Endothelial cell of umbilical vein (primary cell): ENCODE measurements at regions of chr20 and their contacts with region 1.

Region 1: GRCh38 chr20:10357974-10358373 is 76.0 kb downstream of the MKKS start:
- DNase-seq: peak; percentile 37
- H3K4me3 ChIP-seq: no peak overlapping the region
- H3K27ac ChIP-seq: peak overlapping the region; percentile 45
- H3K4me1 ChIP-seq: peaks cover 44% of the 10 kb centered on the region
- H3K27me3 ChIP-seq: no peaks in the 10 kb centered on the region
- CTCF ChIP-seq: peak; percentile 13 to 25
- POLR2A ChIP-seq: no peak

Region 2: GRCh38 chr20:10090588-10091166 is 267.3 kb before region 1 on chr20:
- CTCF ChIA-PET with region 1: interaction called, 9 read pairs
- POLR2A ChIA-PET with region 1: no interaction called
- dilution Hi-C with region 1: no loop called
- intact Hi-C with region 1: loop called (anchors 5 kb)
- DNase-seq: peak; percentile 67
- H3K4me3 ChIP-seq: no peak overlapping the region
- H3K27ac ChIP-seq: no peak overlapping the region
- H3K4me1 ChIP-seq: no peaks in the 10 kb centered on the region
- H3K27me3 ChIP-seq: no peaks in the 10 kb centered on the region
- CTCF ChIP-seq: peak; percentile 69 to 78
- POLR2A ChIP-seq: no peak

Region 3: GRCh38 chr20:10306440-10307358 is 51.3 kb before region 1 on chr20:
- CTCF ChIA-PET with region 1: interaction called, 14 read pairs
- POLR2A ChIA-PET with region 1: interaction called, 3 read pairs
- dilution Hi-C with region 1: no loop called
- intact Hi-C with region 1: no loop called
- DNase-seq: peak; percentile 68
- H3K4me3 ChIP-seq: no peak overlapping the region
- H3K27ac ChIP-seq: peak overlapping the region; percentile 87
- H3K4me1 ChIP-seq: peaks cover 38% of the 10 kb centered on the region
- H3K27me3 ChIP-seq: no peaks in the 10 kb centered on the region
- CTCF ChIP-seq: no peak
- POLR2A ChIP-seq: peak; percentile 64

Region 4: GRCh38 chr20:10369723-10370090 is 11.7 kb after region 1 on chr20:
- CTCF ChIA-PET with region 1: interaction called, 8 read pairs
- POLR2A ChIA-PET with region 1: no interaction called
- dilution Hi-C with region 1: no loop called
- intact Hi-C with region 1: loop called (anchors 1 kb)
- DNase-seq: peak; percentile 80
- H3K4me3 ChIP-seq: no peak overlapping the region
- H3K27ac ChIP-seq: peak overlapping the region; percentile 48
- H3K4me1 ChIP-seq: peaks cover 21% of the 10 kb centered on the region
- H3K27me3 ChIP-seq: no peaks in the 10 kb centered on the region
- CTCF ChIP-seq: no peak
- POLR2A ChIP-seq: no peak

Region 5: DNA sequence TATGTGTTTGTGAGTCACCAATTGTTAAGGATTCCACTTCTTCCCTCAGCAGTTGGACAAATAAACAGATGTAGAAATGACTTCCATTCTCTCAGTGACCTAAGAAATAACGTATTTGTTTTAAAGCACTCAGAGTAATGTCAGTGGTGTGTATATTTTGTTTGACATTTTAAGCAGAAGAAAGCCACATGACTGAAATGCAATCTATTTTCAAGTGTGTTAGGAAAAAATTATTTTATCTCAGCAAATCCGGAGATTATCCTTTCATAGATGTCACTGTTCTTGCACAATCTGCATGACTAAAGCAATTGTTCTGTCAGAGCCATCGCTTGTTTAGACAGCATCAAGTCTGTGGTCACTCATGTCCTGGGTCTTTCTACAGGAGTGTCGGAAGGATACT is 238.8 kb after region 1 on chr20:
- CTCF ChIA-PET with region 1: no interaction called
- POLR2A ChIA-PET with region 1: no interaction called
- dilution Hi-C with region 1: no loop called
- intact Hi-C with region 1: loop called (anchors 5 kb)
- DNase-seq: peak; percentile 55
- H3K4me3 ChIP-seq: no peak overlapping the region
- H3K27ac ChIP-seq: peak overlapping the region; percentile 25
- H3K4me1 ChIP-seq: peaks cover 35% of the 10 kb centered on the region
- H3K27me3 ChIP-seq: no peaks in the 10 kb centered on the region
- CTCF ChIP-seq: no peak
- POLR2A ChIP-seq: no peak